ENCODE measurements at regions of chr10 and their contacts with region 1.

Region 1: DNA sequence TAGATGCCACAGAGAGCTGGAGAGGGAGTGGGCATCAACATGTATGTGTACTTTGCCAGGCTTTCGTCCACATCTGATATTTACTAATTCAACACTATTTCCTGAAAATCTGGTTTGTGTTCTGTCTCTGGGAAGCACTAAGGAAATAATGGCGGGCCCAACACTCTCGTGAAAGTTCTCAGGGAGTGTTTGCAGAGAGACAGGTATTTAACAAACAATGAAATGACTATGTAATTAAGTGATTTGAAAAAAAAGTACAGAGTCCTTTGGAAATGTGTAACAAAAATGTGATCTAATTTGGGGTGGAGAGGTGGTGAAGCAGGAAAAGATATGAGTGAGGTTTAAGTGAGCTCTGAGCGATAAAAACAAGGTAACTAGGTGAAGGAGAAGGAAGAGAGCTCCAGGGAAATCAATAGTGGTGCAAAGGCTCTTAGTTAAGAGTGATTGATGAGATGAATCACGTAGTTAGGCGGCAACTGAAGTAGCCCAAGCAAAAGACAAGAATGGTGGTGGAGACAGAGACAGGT is 95.3 kb upstream of the DNAJB12 start:
- DNase-seq: no peak
- H3K4me3 ChIP-seq: no peak overlapping the region
- H3K27ac ChIP-seq: no peak overlapping the region
- H3K4me1 ChIP-seq: no peaks in the 10 kb centered on the region
- H3K27me3 ChIP-seq: no peaks in the 10 kb centered on the region
- CTCF ChIP-seq: no peak

Region 2: GRCh38 chr10:72407927-72408600 is 41.9 kb before region 1 on chr10:
- CTCF ChIA-PET with region 1: no interaction called
- dilution Hi-C with region 1: loop called (anchors 5 kb)
- in situ Hi-C with region 1: no loop called
- intact Hi-C with region 1: no loop called
- DNase-seq: no peak
- H3K4me3 ChIP-seq: no peak overlapping the region
- H3K27ac ChIP-seq: no peak overlapping the region
- H3K4me1 ChIP-seq: no peaks in the 10 kb centered on the region
- H3K27me3 ChIP-seq: no peaks in the 10 kb centered on the region
- CTCF ChIP-seq: no peak

Region 3: DNA sequence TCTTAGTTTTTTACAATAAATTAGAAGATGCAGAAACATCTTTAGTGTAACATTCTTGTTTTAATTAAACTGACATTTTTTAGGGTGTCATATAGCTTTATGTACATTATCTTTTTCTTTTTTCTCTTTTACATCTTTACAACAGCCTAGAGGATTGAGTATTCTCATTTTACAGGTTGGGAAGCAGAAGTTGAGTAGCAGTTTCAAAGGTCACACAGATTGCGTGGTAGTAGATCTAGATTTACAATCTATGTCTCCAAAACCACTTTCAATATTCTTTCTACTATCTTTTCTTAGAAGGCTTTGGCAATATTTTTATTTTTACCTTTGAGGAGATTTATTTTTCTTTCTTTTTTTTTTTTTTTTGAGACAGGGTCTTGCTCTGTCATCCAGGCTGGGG is 223.3 kb after region 1 on chr10:
- CTCF ChIA-PET with region 1: no interaction called
- dilution Hi-C with region 1: no loop called
- in situ Hi-C with region 1: no loop called
- intact Hi-C with region 1: no loop called
- DNase-seq: no peak
- H3K4me3 ChIP-seq: no peak overlapping the region
- H3K27ac ChIP-seq: no peak overlapping the region
- H3K4me1 ChIP-seq: peaks cover 17% of the 10 kb centered on the region
- H3K27me3 ChIP-seq: no peaks in the 10 kb centered on the region
- CTCF ChIP-seq: no peak